HAP-1 (cell line): ENCODE measurements at regions of chr16 and their contacts with region 1.

Region 1: DNA sequence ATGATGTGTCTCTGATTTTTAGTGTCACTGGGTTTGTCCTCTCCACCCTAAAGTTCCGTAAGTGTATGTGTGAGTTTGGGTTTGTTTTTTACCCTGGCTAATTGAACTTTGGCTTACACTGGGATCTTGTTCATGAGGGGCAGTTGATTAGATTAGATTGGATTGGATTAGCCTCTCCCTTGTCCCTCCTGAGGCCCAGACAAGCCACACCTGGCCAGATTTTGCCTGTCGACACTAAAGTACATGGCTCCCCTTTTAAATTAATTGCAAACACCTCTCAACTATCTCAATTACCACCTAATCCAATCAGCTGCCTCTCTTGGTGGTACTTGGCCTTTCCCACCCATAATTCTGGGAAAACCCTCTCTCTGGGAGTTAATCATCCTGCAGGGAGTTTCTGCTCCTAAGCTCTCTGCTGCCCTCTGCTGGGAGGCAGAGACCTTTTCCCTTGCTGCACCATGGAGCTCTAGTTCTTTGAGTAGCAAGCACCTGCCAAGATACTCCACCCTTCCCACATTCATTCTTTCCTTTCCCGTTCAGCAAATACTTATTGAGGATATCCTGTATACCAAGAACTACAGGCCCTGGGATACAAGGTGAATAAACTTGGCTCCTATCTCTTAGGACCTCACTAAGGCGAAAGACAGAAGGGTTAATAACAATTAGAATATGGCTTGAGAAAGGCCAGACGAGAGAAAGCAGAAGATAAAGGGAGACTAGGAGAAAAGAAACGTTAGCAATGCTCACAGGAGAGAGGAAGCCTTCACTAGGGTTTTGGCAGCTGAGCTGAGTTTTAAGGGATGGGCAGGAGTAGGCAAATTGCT is 60.0 kb upstream of the MPHOSPH6 start:
- DNase-seq: peak; percentile 56 to 88
- H3K4me3 ChIP-seq: no peak overlapping the region
- H3K4me1 ChIP-seq: no peaks in the 10 kb centered on the region
- H3K27me3 ChIP-seq: no peaks in the 10 kb centered on the region

Region 2: GRCh38 chr16:81940781-81941560 is 289.0 kb before region 1 on chr16:
- in situ Hi-C with region 1: loop called (anchors 25 kb)
- DNase-seq: peak in 1 of 2 experiments; percentile 47
- H3K4me3 ChIP-seq: no peak overlapping the region
- H3K4me1 ChIP-seq: peaks cover 15% of the 10 kb centered on the region
- H3K27me3 ChIP-seq: no peaks in the 10 kb centered on the region

Region 3: DNA sequence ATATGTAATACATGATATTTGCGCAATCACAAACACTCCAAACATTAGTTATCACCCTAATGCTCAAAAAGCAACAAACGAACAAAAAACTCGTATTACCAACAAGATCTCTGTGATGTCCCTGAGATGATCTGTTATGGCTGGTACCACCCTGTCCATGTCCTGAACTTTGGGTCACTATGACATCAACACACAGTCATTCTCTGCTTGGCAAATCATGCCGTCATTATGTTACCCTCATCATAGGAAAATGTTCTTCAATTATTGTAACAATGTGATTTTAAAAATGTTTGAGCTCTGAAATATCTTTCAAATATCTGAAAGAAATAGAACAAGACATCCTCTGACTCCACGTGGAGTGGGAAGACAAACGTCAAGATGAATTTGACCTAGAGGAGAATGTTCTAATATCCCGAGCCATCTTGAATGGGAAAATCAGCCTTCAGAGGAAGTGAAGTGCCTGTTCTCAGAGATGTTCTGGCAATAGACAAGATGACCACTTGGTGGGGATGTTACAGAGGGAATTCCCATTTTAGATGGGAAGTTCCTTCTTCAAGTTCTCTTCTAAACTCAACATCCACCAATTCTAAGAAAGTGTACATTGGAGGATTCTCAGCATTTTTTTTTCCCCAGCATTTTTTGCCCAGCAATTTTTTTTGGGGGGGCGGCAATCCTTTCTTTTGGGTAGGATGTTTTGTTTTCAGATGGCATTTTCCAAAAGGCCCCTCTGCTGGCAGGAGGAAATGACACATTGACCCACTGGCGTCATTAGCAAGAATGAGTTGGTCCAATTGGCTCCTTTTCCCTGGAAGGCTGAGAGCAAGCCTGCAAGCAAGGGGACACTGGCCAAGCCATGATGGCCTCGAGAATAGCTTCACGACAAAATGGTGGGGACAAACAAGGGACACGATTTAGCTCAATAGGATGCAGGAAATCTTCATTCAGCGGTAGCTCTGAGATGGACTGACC is 198.6 kb before region 1 on chr16:
- in situ Hi-C with region 1: loop called (anchors 5 kb)
- DNase-seq: peak; percentile 20 to 38
- H3K4me3 ChIP-seq: no peak overlapping the region
- H3K4me1 ChIP-seq: no peaks in the 10 kb centered on the region
- H3K27me3 ChIP-seq: no peaks in the 10 kb centered on the region